Activated CD4-positive, alpha-beta memory T cell treated with anti-CD3 and anti-CD28 coated beads for 36 hours (primary cell): ENCODE measurements at regions of chr7 and their contacts with region 1.

Region 1: DNA sequence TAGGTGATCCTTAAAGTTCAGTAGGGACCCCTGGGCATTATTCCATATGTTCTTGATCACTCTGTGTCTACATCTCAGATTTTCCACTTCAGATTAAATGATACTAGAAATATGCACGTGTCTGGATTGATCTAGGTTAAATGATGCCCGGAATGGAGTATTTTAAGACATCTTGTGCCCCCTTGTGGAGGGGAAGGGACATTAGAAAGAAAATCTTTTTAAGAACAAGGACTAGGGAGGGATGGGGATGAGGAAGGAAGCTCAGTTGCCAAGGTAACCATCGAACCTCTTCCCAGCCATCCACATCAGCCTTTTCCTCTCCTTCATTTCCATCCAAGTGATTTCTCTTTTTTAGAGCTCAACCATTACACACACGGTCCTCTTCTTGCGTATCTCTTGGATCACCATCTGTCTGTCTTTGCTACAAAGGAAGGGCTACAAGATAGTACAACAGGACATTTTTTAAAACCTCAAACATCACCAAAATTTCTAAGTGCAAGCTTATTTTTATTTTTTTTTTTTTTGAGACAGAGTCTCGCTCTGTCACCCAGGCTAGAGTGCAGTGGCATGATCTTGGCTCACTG is 40.5 kb downstream of the PRSS2 start:
- DNase-seq: peak; percentile 29
- H3K4me3 Mint-ChIP-seq: peak overlapping the region; percentile 62
- H3K27ac Mint-ChIP-seq: peak overlapping the region; percentile 100
- H3K4me1 Mint-ChIP-seq: peaks cover 76% of the 10 kb centered on the region
- H3K27me3 Mint-ChIP-seq: no peaks in the 10 kb centered on the region

Region 2: DNA sequence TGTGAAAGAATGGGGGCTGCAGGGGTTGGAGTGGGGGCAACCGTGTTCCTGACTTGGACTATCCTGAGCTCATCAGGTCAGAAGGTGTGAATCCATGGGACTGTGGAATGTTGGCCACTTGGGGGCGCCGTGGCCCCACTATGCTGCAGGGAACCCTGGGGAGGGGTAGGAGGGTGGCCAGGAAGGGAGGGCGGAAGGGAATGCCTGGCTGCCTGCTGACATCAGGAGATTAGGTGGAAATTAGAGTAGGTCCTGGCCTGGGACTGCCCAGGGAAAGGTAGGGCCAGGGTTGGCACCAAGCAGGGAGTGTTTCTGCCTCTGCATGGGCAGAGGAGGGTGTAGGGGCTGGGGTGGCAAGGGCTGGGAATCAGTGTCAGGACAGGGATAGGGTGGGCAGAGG is 487.5 kb before region 1 on chr7:
- CTCF ChIA-PET with region 1: interaction called, 15 read pairs
- POLR2A ChIA-PET with region 1: interaction called, 4 read pairs
- intact Hi-C with region 1: loop called (anchors 1 kb)
- DNase-seq: peak; percentile 75
- H3K4me3 Mint-ChIP-seq: peak overlapping the region; percentile 35
- H3K27ac Mint-ChIP-seq: peak overlapping the region; percentile 43
- H3K4me1 Mint-ChIP-seq: peaks cover 33% of the 10 kb centered on the region
- H3K27me3 Mint-ChIP-seq: peaks cover 6% of the 10 kb centered on the region

Region 3: DNA sequence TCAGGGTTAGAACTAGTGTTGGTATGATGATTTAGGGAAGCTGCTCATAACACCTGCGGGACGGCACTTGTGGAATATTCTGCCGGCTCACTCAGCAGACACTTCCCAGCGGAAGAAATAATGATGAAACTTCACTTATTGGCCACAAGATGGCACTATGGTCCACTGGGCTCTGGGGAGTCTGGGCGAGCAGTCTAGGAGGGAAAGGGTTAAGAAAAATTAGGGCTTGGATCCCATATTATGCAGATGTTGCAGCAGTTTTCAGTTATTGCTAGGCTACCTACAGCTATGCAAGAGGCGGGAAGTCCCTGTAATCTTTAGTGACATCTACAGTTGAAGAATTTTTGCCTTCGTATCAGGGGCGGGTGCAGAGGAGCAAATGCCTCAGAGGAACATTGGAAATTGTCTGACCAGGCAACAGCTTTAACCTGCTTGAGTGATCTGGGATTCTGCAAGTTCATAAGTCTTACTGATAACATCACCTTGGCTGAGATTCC is 314.7 kb before region 1 on chr7:
- CTCF ChIA-PET with region 1: interaction called, 4 read pairs
- POLR2A ChIA-PET with region 1: no interaction called
- intact Hi-C with region 1: loop called (anchors 5 kb)
- DNase-seq: peak; percentile 39
- H3K4me3 Mint-ChIP-seq: peak overlapping the region; percentile 47
- H3K27ac Mint-ChIP-seq: peak overlapping the region; percentile 7
- H3K4me1 Mint-ChIP-seq: peaks cover 34% of the 10 kb centered on the region
- H3K27me3 Mint-ChIP-seq: no peaks in the 10 kb centered on the region

Region 4: DNA sequence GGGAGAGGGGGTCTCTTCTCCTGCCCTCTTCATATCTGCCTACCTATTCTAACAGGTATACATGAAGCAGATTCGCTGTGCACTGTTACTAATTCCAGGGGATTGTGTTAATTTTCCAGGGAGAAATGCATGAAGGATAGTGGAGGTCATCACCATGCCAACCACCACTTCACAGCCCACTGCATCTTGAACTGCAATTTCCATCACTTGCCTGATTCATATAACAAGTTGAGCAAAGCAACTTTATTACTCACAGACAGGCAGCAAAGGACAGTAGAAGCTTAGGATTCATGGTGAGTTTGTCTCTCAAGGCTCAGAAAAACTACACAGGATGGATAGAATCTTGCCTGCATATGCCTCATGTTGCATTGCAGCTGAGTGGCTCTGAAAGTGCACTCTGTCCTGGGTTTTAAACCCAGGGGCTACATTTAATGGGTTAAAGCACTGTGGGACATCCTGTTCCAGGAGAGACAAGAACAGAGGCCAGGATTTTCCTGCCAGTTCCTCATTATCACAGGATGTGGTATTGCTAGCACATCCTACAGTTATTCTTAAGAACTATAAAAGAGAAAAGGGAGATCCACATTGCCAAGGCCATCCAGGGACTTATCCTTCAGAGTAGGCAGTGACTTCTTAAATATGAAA is 198.9 kb before region 1 on chr7:
- CTCF ChIA-PET with region 1: interaction called, 17 read pairs
- POLR2A ChIA-PET with region 1: interaction called, 7 read pairs
- intact Hi-C with region 1: loop called (anchors 1 kb)
- DNase-seq: peak; percentile 20
- H3K4me3 Mint-ChIP-seq: no peak overlapping the region
- H3K27ac Mint-ChIP-seq: peak overlapping the region; percentile 66
- H3K4me1 Mint-ChIP-seq: peaks cover 34% of the 10 kb centered on the region
- H3K27me3 Mint-ChIP-seq: peaks cover 1% of the 10 kb centered on the region

Region 5: DNA sequence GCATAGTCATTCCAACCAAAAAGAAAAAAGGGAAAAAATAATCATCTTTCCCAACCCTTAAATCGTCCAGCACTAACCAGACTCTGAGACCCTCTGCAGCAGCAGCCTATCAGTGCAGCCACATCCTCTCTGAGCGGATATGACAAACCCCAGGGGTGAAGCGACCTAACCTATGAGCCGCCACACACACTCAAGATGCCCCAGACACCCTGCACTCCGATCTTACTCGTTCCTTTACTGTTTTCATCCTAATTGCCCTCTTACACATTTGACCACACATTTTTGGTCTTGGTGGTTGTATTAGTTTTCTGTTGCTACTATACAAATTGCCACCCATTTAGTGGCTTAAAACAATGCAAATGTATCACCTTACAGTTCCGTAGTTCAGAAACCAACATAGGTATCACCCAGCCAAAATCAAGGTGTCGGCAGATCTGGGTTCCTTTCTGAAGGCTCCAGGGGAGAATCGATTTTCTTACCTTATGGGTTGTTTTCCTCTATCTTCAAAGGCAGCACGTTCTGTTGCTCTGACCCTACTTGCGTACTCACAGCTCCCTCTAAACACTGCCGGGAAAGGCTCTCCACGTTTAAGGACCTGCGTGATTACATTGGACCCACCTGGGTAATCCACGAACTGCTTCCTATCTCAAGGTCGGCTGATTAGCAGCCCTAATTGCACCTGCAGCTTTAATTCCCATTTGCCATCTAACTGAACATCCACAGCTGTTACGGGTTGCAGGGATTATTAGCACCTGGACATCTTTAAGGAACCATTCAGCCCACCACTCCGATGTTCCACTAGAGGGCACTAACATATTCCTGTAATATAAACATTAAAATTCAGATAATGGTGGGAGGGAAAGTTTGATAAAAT is 99.3 kb before region 1 on chr7:
- CTCF ChIA-PET with region 1: interaction called, 32 read pairs
- POLR2A ChIA-PET with region 1: interaction called, 7 read pairs
- intact Hi-C with region 1: loop called (anchors 1 kb)
- DNase-seq: peak; percentile 52
- H3K4me3 Mint-ChIP-seq: peak overlapping the region; percentile 79
- H3K27ac Mint-ChIP-seq: peak overlapping the region; percentile 89
- H3K4me1 Mint-ChIP-seq: peaks cover 50% of the 10 kb centered on the region
- H3K27me3 Mint-ChIP-seq: no peaks in the 10 kb centered on the region

Region 6: DNA sequence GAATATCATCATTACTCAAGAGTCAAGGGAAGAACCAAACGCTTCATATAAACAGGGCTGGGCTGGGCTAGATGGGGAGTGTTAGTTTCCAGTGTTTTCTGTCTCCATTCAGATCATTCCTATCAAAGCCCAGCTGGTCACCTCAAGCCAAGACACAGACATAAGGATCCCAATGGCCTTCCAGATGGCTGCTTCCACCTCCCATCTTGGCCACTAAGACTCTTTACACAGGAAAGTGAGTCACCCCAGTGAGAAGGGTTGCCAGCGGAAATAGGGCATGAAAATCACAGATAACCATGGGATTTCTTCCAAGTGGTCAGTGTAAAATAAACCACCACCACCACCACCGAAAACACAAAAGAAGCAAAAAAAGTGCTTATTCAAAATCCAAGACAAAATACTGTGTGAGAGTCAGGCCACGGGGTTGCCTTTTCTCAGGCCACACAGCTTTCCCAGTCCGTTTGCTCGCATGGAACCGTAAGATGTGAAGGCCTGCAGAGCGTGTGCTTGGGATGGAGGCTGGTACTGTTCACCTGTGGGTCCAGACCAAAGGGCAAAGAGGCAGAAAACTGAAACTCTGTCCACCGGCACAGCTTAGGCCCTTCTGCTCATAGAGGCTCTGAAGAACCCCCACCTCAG is 34.9 kb before region 1 on chr7:
- CTCF ChIA-PET with region 1: no interaction called
- POLR2A ChIA-PET with region 1: no interaction called
- intact Hi-C with region 1: no loop called
- DNase-seq: no peak
- H3K4me3 Mint-ChIP-seq: no peak overlapping the region
- H3K27ac Mint-ChIP-seq: no peak overlapping the region
- H3K4me1 Mint-ChIP-seq: peaks cover 1% of the 10 kb centered on the region
- H3K27me3 Mint-ChIP-seq: no peaks in the 10 kb centered on the region

Region 7: GRCh38 chr7:142853739-142854371 is 42.6 kb after region 1 on chr7:
- CTCF ChIA-PET with region 1: interaction called, 8 read pairs
- POLR2A ChIA-PET with region 1: no interaction called
- intact Hi-C with region 1: loop called (anchors 1 kb)
- DNase-seq: peak; percentile 73
- H3K4me3 Mint-ChIP-seq: peak overlapping the region; percentile 93
- H3K27ac Mint-ChIP-seq: peak overlapping the region; percentile 72
- H3K4me1 Mint-ChIP-seq: peaks cover 16% of the 10 kb centered on the region
- H3K27me3 Mint-ChIP-seq: peaks cover 3% of the 10 kb centered on the region